Transverse colon (tissue), 4 donors: ENCODE measurements at regions of chr11 and their contacts with region 1.

Region 1: DNA sequence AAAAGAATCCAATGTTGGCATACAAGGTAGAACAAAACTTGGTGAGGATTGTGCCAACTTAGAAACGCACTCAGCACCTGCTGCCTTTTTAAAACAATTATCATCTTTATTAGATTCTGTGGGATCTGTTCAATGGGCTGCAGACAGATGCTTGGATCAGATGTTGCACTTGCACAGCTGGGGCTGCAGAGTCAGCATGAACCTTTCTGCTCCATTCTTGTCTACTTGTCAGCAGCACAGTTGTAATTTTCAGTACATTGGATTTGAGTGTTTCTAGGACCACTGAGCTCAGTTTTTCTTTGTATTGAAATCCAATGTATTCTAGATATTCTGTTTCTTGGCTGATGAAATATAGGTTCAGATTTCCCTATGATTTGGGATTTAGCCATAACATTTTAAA is 164.5 kb downstream of the LUZP2 start:
- DNase-seq: no peak
- H3K4me3 ChIP-seq: no peak overlapping the region
- H3K27ac ChIP-seq: no peak overlapping the region
- H3K4me1 ChIP-seq: no peaks in the 10 kb centered on the region
- H3K27me3 ChIP-seq: no peaks in the 10 kb centered on the region
- CTCF ChIP-seq: no peak
- EP300 ChIP-seq: no peak
- POLR2A ChIP-seq: no peak

Region 2: GRCh38 chr11:24609192-24610119 is 51.9 kb before region 1 on chr11:
- in situ Hi-C with region 1: no loop called
- intact Hi-C with region 1: loop called (anchors 2 kb)
- DNase-seq: no peak
- H3K4me3 ChIP-seq: no peak overlapping the region
- H3K27ac ChIP-seq: no peak overlapping the region
- H3K4me1 ChIP-seq: no peaks in the 10 kb centered on the region
- H3K27me3 ChIP-seq: no peaks in the 10 kb centered on the region
- CTCF ChIP-seq: no peak
- EP300 ChIP-seq: no peak
- POLR2A ChIP-seq: no peak

Region 3: DNA sequence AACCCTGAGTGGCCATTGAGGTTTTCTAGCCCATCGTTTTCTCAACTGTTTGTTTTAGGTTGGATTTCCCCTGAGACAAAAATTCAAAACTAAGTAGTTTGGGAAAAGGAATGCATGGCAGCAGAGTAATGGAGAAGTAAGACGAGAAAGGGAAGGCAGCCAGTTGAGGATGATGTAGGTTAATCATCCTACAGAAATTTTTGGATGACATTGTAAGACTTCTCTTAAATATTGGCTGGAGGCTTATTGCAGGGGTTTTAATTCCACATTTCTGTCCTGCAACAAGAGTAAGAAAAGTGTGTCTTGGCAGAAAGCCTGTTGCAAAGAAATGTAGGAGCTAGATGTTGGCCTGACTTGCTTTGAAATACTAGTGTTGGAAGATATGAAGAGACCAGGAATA is 144.3 kb after region 1 on chr11:
- in situ Hi-C with region 1: no loop called
- intact Hi-C with region 1: no loop called
- DNase-seq: no peak
- H3K4me3 ChIP-seq: no peak overlapping the region
- H3K27ac ChIP-seq: no peak overlapping the region
- H3K4me1 ChIP-seq: no peaks in the 10 kb centered on the region
- H3K27me3 ChIP-seq: no peaks in the 10 kb centered on the region
- CTCF ChIP-seq: no peak
- EP300 ChIP-seq: no peak
- POLR2A ChIP-seq: no peak

Region 4: GRCh38 chr11:24885580-24886173 is 224.3 kb after region 1 on chr11:
- in situ Hi-C with region 1: no loop called
- intact Hi-C with region 1: no loop called
- DNase-seq: no peak
- H3K4me3 ChIP-seq: no peak overlapping the region
- H3K27ac ChIP-seq: no peak overlapping the region
- H3K4me1 ChIP-seq: no peaks in the 10 kb centered on the region
- H3K27me3 ChIP-seq: no peaks in the 10 kb centered on the region
- CTCF ChIP-seq: no peak
- EP300 ChIP-seq: no peak
- POLR2A ChIP-seq: no peak